Adrenal gland (tissue), 19 donors: ENCODE measurements at regions of chr1 and their contacts with region 1.

Region 1: DNA sequence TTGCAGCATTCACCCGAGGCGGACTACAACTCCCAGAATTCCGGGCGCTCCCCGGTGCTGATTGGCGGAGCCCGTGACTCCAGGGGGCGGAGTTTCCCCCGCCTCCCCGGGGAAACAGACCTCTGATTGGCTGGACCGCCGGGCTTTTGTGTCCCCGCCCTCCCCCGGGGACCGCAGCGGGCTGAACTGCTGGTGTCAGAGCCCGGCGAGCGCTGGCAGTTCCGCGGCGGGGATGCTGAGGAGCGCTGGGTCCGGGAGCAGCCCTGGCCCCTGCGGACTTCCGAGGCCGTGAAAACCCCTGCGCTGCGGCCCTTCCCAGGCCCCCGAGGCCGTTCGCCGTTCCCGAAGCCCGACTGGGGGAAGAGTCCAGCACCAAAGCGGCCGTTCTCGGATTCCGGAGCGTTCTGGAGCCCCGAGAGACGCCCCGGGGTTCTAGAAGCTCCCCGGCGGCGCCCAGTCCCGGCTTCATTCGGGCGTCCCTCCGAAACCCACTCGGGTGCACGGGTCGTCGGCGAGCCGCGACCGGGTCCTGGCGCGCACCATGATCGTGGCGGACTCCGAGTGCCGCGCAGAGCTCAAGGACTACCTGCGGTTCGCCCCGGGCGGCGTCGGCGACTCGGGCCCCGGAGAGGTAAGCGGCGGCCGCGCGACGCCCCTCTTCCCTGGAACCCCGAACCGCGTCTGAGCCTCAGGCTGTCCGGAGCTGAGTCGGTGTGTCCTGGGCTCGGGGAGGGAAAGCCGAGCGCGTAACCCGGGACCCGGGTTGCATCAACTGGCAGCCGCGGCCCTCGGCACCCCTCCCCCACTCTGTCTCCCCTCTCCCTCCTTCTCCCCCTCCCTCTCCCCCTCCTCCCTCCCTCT is at the start of gene SESN2:
- DNase-seq: peak; percentile 99 to 100 (median 100)
- H3K4me3 ChIP-seq: peak within 1 kb of the TSS; percentile 67 to 73 (median 71)
- H3K27ac ChIP-seq: peak within 1 kb of the TSS; percentile 62 to 87 (median 84)
- H3K4me1 ChIP-seq: peaks cover 14 to 22% of the 10 kb centered on the region in 2 donors
- H3K27me3 ChIP-seq: no peaks in the 10 kb centered on the region
- CTCF ChIP-seq: no peak
- POLR2A ChIP-seq: peak; percentile 97 to 99
- total RNA-seq, gene SESN2: 8.0 to 19.1 (median 11.2) TPM

Region 2: GRCh38 chr1:28313710-28314546 is 54.4 kb after region 1 on chr1:
- intact Hi-C with region 1: loop called in 1 of 2 experiments (anchors 10 kb)
- DNase-seq: peak; percentile 44 to 84 (median 80)
- H3K4me3 ChIP-seq: no peak overlapping the region
- H3K27ac ChIP-seq: peak overlapping the region in 1 of 5 donors; percentile 23
- H3K4me1 ChIP-seq: peaks cover 0 to 4% of the 10 kb centered on the region in 2 donors
- H3K27me3 ChIP-seq: no peaks in the 10 kb centered on the region
- CTCF ChIP-seq: no peak
- POLR2A ChIP-seq: no peak

Region 3: GRCh38 chr1:28329395-28330153 is 70.0 kb after region 1 on chr1:
- intact Hi-C with region 1: loop called in 1 of 2 experiments (anchors 10 kb)
- DNase-seq: peak in 6 of 7 donors; percentile 23 to 59 (median 49)
- H3K4me3 ChIP-seq: peak overlapping the region in 3 of 4 donors; percentile 62 to 72 (median 64)
- H3K27ac ChIP-seq: peak overlapping the region; percentile 33 to 86 (median 81)
- H3K4me1 ChIP-seq: peaks cover 3 to 9% of the 10 kb centered on the region in 2 donors
- H3K27me3 ChIP-seq: no peaks in the 10 kb centered on the region
- CTCF ChIP-seq: peak in 4 of 6 experiments; percentile 18 to 45 (median 24)
- POLR2A ChIP-seq: no peak